Mammary epithelial cell (primary cell): ENCODE measurements at regions of chr2 and their contacts with region 1.

Region 1: GRCh38 chr2:174697255-174697654 is 67.0 kb downstream of the CHRNA1 start:
- DNase-seq: peak; percentile 40
- H3K4me3 ChIP-seq: no peak overlapping the region
- H3K27ac ChIP-seq: no peak overlapping the region
- H3K4me1 ChIP-seq: no peaks in the 10 kb centered on the region
- H3K27me3 ChIP-seq: peaks cover 7% of the 10 kb centered on the region
- CTCF ChIP-seq: peak; percentile 73 to 88

Region 2: GRCh38 chr2:174051741-174052583 is 645.3 kb before region 1 on chr2:
- CTCF ChIA-PET with region 1: no interaction called
- dilution Hi-C with region 1: no loop called
- in situ Hi-C with region 1: no loop called
- intact Hi-C with region 1: no loop called
- DNase-seq: peak; percentile 53
- H3K4me3 ChIP-seq: no peak overlapping the region
- H3K27ac ChIP-seq: no peak overlapping the region
- H3K4me1 ChIP-seq: peaks cover 6% of the 10 kb centered on the region
- H3K27me3 ChIP-seq: no peaks in the 10 kb centered on the region
- CTCF ChIP-seq: no peak

Region 3: GRCh38 chr2:174450021-174450816 is 247.0 kb before region 1 on chr2:
- CTCF ChIA-PET with region 1: no interaction called
- dilution Hi-C with region 1: no loop called
- in situ Hi-C with region 1: loop called (anchors 10 to 25 kb)
- intact Hi-C with region 1: no loop called
- DNase-seq: no peak
- H3K4me3 ChIP-seq: no peak overlapping the region
- H3K27ac ChIP-seq: no peak overlapping the region
- H3K4me1 ChIP-seq: no peaks in the 10 kb centered on the region
- H3K27me3 ChIP-seq: no peaks in the 10 kb centered on the region
- CTCF ChIP-seq: no peak

Region 4: DNA sequence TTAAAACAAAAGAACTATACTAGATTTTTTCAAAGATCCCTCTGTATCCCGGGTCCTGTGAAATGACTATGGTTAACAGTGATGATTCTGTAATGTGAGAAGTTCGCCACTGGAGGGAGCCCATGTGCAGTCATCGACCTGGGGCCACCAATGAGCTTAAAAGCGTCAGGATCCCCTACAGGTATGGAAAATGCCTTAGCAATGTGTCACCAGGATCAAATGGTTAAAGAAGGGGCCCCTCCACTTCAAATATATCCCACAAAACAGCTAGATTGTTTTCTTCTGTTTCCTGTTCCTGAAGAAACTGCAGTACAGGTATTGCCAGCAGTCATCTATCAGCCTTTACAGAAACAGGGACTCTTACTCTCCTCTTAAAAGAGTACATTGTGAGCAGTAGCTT is 51.7 kb after region 1 on chr2:
- CTCF ChIA-PET with region 1: no interaction called
- dilution Hi-C with region 1: no loop called
- in situ Hi-C with region 1: no loop called
- intact Hi-C with region 1: loop called (anchors 5 kb)
- DNase-seq: peak; percentile 61
- H3K4me3 ChIP-seq: no peak overlapping the region
- H3K27ac ChIP-seq: no peak overlapping the region
- H3K4me1 ChIP-seq: no peaks in the 10 kb centered on the region
- H3K27me3 ChIP-seq: no peaks in the 10 kb centered on the region
- CTCF ChIP-seq: peak; percentile 75 to 80

Region 5: GRCh38 chr2:174985630-174986029 is 288.4 kb after region 1 on chr2:
- CTCF ChIA-PET with region 1: no interaction called
- dilution Hi-C with region 1: no loop called
- in situ Hi-C with region 1: no loop called
- intact Hi-C with region 1: loop called (anchors 2 kb)
- DNase-seq: no peak
- H3K4me3 ChIP-seq: no peak overlapping the region
- H3K27ac ChIP-seq: no peak overlapping the region
- H3K4me1 ChIP-seq: no peaks in the 10 kb centered on the region
- H3K27me3 ChIP-seq: no peaks in the 10 kb centered on the region
- CTCF ChIP-seq: peak; percentile 38 to 55